GM12878 (cell line): ENCODE measurements at regions of chrX and their contacts with region 1.

Region 1: GRCh38 chrX:24259544-24260240 is 54.2 kb downstream of the SUPT20HL2 start:
- DNase-seq: no peak
- ATAC-seq: peak; percentile 86
- H3K4me3 ChIP-seq: no peak overlapping the region
- H3K27ac ChIP-seq: no peak overlapping the region
- H3K4me1 ChIP-seq: no peaks in the 10 kb centered on the region; the same call in 1 of the 2 replicates
- H3K27me3 ChIP-seq: no peaks in the 10 kb centered on the region; a peak in 1 of 4 replicates
- CTCF ChIP-seq: peak; percentile 57 to 66 (median 65); a peak in 5 of 6 replicates
- EP300 ChIP-seq: no peak
- POLR2A ChIP-seq: no peak
- RAD21 ChIP-seq: peak; percentile 74

Region 2: DNA sequence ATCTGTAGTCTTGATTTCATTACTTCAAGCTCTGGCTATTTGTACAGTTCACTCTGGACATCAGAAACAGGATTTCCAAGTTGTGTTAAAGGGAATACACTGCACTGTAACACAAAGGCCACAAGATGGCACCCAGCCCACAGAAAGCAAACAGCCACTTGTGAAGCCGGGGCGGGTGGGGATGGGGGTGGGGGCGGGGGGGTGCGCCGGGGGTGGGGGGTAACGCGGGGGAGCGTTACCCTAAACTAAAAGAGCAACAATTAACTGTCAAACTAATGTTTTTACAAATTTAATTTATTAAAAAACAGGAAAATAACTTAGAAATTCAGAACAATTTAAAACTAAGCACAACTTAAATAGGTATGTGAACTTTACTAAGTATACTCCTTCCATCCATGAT is 565.1 kb before region 1 on chrX:
- CTCF ChIA-PET with region 1: no interaction called
- POLR2A ChIA-PET with region 1: no interaction called
- RAD21 ChIA-PET with region 1: no interaction called
- SMC1A ChIA-PET with region 1: no interaction called
- in situ Hi-C with region 1: loop called (anchors 10 kb)
- intact Hi-C with region 1: no loop called
- DNase-seq: peak; percentile 11
- ATAC-seq: peak; percentile 90
- H3K4me3 ChIP-seq: no peak overlapping the region
- H3K27ac ChIP-seq: no peak overlapping the region
- H3K4me1 ChIP-seq: no peaks in the 10 kb centered on the region
- H3K27me3 ChIP-seq: no peaks in the 10 kb centered on the region
- CTCF ChIP-seq: peak; percentile 37 to 70 (median 63); a peak in 5 of 6 replicates
- EP300 ChIP-seq: no peak
- POLR2A ChIP-seq: no peak
- RAD21 ChIP-seq: peak; percentile 76

Region 3: GRCh38 chrX:24221872-24222271 is 37.8 kb before region 1 on chrX:
- CTCF ChIA-PET with region 1: no interaction called
- POLR2A ChIA-PET with region 1: no interaction called
- RAD21 ChIA-PET with region 1: no interaction called
- SMC1A ChIA-PET with region 1: no interaction called
- in situ Hi-C with region 1: no loop called
- intact Hi-C with region 1: no loop called
- DNase-seq: no peak
- ATAC-seq: no peak
- H3K4me3 ChIP-seq: no peak overlapping the region
- H3K27ac ChIP-seq: no peak overlapping the region
- H3K4me1 ChIP-seq: no peaks in the 10 kb centered on the region
- H3K27me3 ChIP-seq: no peaks in the 10 kb centered on the region
- CTCF ChIP-seq: no peak
- EP300 ChIP-seq: no peak
- POLR2A ChIP-seq: no peak
- RAD21 ChIP-seq: no peak

Region 4: DNA sequence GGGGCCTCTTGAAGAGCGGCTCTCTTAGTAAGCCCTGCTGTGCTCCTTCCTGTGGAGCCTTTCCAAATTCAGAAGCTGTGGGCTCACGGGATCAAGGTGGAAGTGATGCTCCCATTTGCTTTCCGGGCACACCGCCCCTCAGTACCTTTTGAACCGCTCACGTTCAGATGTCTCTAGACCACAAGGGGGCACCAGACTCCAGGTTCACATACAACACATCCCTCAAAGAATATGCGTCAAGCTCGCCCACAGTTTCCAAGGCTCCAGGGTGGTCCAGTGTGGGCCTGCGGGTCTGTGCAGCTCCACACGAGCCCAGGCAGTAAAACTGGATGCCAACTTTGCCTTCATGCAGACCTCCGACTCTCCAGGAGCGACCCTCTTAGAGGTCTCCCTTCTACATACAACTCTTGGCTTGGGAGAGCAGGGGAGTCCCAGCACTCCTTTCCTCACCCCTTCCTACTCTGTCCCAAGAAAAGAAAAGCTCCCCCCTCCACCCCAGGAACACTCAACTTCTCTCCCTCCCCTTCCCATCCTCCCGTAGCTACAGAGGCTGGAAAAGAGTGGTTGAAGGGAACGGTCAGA is 111.8 kb after region 1 on chrX:
- CTCF ChIA-PET with region 1: interaction called, 23 read pairs
- POLR2A ChIA-PET with region 1: no interaction called
- RAD21 ChIA-PET with region 1: interaction called, 3 read pairs
- SMC1A ChIA-PET with region 1: interaction called, 16 read pairs
- in situ Hi-C with region 1: no loop called
- intact Hi-C with region 1: loop called (anchors 5 kb)
- DNase-seq: peak; percentile 8
- ATAC-seq: peak; percentile 97
- H3K4me3 ChIP-seq: no peak overlapping the region
- H3K27ac ChIP-seq: no peak overlapping the region
- H3K4me1 ChIP-seq: no peaks in the 10 kb centered on the region
- H3K27me3 ChIP-seq: peaks cover 0 to 2% of the 10 kb centered on the region in 2 experiments; a peak in 1 of 4 replicates
- CTCF ChIP-seq: peak; percentile 72 to 79 (median 73)
- EP300 ChIP-seq: no peak
- POLR2A ChIP-seq: no peak
- RAD21 ChIP-seq: peak; percentile 70

Region 5: DNA sequence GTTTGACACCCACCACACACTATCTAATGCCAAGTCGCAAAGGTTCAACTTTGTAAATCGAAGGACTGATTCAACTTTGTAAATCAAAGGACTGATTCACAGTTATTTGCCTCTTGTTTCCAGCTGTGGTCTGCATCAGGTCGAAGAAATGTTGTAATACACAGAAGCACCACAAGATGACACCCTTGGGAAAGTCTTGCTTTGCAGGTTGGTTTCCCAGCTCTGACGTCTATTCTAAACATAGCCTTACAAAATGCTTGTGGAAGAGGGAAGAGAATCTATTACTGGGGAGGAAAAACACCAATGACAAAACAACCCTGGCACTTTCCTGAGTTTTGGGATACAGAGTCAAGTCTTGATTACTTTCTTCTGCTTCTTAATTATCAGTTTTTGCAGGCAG is 136.1 kb after region 1 on chrX:
- CTCF ChIA-PET with region 1: interaction called, 13 read pairs
- POLR2A ChIA-PET with region 1: no interaction called
- RAD21 ChIA-PET with region 1: interaction called, 4 read pairs
- SMC1A ChIA-PET with region 1: interaction called, 7 read pairs
- in situ Hi-C with region 1: no loop called
- intact Hi-C with region 1: no loop called
- DNase-seq: peak; percentile 51
- ATAC-seq: peak; percentile 94
- H3K4me3 ChIP-seq: no peak overlapping the region
- H3K27ac ChIP-seq: no peak overlapping the region
- H3K4me1 ChIP-seq: no peaks in the 10 kb centered on the region
- H3K27me3 ChIP-seq: no peaks in the 10 kb centered on the region
- CTCF ChIP-seq: peak; percentile 77 to 91 (median 85)
- EP300 ChIP-seq: no peak
- POLR2A ChIP-seq: no peak
- RAD21 ChIP-seq: peak; percentile 98

Region 6: GRCh38 chrX:24561121-24561520 is 301.4 kb after region 1 on chrX:
- CTCF ChIA-PET with region 1: interaction called, 3 read pairs
- POLR2A ChIA-PET with region 1: no interaction called
- RAD21 ChIA-PET with region 1: no interaction called
- SMC1A ChIA-PET with region 1: no interaction called
- in situ Hi-C with region 1: no loop called
- intact Hi-C with region 1: loop called (anchors 10 kb)
- DNase-seq: no peak
- ATAC-seq: peak; percentile 82
- H3K4me3 ChIP-seq: no peak overlapping the region
- H3K27ac ChIP-seq: no peak overlapping the region
- H3K4me1 ChIP-seq: no peaks in the 10 kb centered on the region
- H3K27me3 ChIP-seq: no peaks in the 10 kb centered on the region; a peak in 2 of 4 replicates
- CTCF ChIP-seq: peak; percentile 35 to 51 (median 42); a peak in 3 of 6 replicates
- EP300 ChIP-seq: no peak
- POLR2A ChIP-seq: no peak
- RAD21 ChIP-seq: peak; percentile 53

Region 7: DNA sequence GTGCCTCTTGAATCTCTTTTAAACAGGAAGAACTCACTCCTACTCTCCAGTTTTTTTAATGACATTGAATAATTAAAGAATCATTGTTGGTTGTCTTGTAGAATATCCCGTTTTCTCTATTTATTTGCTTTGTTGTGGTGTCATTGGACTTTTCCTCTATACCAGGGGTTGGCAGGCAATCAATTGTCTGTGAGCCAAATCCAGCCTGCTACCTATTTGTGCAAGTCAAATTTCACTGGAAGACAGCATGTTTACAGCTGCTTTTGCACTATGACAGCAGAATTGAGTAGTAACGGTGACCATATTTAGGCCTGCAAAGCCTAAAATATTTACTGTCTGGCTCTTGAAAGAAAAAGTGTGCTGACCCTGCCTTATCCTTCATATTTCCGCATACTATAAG is 468.8 kb after region 1 on chrX:
- CTCF ChIA-PET with region 1: no interaction called
- POLR2A ChIA-PET with region 1: no interaction called
- RAD21 ChIA-PET with region 1: no interaction called
- SMC1A ChIA-PET with region 1: no interaction called
- in situ Hi-C with region 1: no loop called
- intact Hi-C with region 1: no loop called
- DNase-seq: no peak
- ATAC-seq: no peak
- H3K4me3 ChIP-seq: no peak overlapping the region
- H3K27ac ChIP-seq: no peak overlapping the region
- H3K4me1 ChIP-seq: no peaks in the 10 kb centered on the region
- H3K27me3 ChIP-seq: no peaks in the 10 kb centered on the region
- CTCF ChIP-seq: no peak
- EP300 ChIP-seq: no peak
- POLR2A ChIP-seq: no peak
- RAD21 ChIP-seq: no peak